ENCODE measurements at regions of chr14 and their contacts with region 1.

Region 1: GRCh38 chr14:77023001-77023996 is 5.2 kb downstream of the IRF2BPL start:
- DNase-seq: peak; percentile 77
- ATAC-seq: peak; percentile 24
- H3K4me3 Mint-ChIP-seq: peak overlapping the region; percentile 59
- H3K27ac Mint-ChIP-seq: peak overlapping the region; percentile 81
- H3K4me1 Mint-ChIP-seq: peaks cover 43% of the 10 kb centered on the region
- H3K27me3 Mint-ChIP-seq: no peaks in the 10 kb centered on the region

Region 2: DNA sequence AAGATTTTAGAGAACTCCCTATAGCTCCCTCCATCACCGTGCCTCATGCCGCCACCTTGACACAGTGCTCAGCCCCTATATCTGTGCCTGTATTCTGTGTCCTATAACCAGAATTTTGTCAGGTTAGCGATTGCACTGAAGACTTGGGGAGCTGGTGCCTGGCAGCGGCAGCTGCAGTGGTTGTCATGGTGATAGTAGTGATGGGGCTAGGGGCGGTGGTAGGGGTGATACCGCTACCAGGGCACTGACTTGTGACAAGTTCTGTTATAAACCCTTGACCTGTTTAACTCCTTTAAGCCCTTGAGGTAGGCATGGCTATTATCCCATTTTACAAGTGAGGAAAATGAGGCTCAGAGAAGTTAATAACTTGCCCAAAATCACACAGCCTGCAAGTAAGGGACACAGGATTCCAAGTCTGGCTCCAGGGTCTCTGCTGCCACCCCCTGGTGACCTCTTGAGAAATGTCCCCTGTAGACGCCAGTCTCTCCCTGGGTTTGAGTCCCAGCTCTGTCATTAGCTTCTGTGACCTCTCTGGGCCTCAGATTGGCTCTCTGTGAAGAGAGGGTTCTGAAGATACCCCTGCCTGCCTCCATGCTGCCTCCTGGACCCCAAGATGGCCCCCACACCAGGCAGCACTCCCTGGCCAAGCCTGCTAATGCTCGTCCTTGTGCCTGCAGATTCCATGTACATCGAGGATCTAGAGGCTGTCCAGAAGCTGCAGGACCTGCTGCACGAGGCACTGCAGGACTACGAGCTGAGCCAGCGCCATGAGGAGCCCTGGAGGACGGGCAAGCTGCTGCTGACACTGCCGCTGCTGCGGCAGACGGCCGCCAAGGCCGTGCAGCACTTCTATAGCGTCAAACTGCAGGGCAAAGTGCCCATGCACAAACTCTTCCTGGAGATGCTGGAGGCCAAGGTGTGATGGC is 525.5 kb before region 1 on chr14:
- CTCF ChIA-PET with region 1: no interaction called
- POLR2A ChIA-PET with region 1: no interaction called
- intact Hi-C with region 1: no loop called
- DNase-seq: peak; percentile 13
- ATAC-seq: no peak
- H3K4me3 Mint-ChIP-seq: no peak overlapping the region
- H3K27ac Mint-ChIP-seq: no peak overlapping the region
- H3K4me1 Mint-ChIP-seq: no peaks in the 10 kb centered on the region
- H3K27me3 Mint-ChIP-seq: no peaks in the 10 kb centered on the region

Region 3: DNA sequence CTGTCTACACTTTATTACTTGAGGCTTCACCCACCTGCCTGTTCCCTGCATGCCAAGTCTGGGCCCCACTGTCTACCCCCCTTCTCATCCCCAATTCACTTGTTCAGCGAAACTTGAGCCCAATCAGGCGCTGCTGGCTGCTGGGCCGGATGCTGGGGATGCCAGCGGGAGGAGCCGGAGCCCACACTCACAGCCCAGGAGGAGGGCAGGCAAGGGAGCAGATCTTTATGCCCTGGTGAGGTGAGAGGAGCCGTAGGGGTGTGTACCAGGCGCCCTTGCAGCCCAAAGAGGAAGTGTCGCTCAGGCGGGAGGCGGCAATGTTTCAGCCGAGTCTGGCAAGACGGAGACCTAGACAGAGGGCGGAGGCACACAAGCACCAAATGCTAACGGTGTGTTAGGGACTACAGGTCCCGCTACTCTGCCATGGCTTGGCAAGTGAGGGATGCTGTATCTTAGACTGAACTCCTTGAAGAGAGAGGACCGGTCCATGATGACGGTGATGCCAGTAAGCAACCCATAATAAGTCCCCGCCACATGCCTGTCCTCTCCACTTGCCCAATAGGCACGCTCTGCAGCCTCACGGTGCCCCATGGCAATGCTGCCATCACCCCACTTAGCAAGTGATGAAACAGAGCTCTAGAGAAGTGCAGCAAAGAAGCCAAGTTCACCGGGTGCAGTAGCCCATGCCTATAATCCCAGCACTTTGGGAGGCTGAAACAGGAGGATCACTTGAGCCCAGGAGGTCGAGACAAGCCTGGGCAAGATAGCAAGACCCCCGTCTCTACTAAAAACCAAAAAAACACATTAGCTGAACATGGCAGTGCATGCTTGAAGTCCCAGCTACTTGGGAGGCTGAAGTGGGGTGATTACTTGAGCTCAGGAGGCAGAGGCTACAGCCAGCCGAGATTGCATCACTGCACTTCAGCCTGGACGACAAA is 155.5 kb before region 1 on chr14:
- CTCF ChIA-PET with region 1: no interaction called
- POLR2A ChIA-PET with region 1: no interaction called
- intact Hi-C with region 1: no loop called
- DNase-seq: peak; percentile 65
- ATAC-seq: peak; percentile 83
- H3K4me3 Mint-ChIP-seq: peak overlapping the region; percentile 8
- H3K27ac Mint-ChIP-seq: peak overlapping the region; percentile 58
- H3K4me1 Mint-ChIP-seq: peaks cover 38% of the 10 kb centered on the region
- H3K27me3 Mint-ChIP-seq: no peaks in the 10 kb centered on the region

Region 4: GRCh38 chr14:76918751-76919543 is 104.4 kb before region 1 on chr14:
- CTCF ChIA-PET with region 1: interaction called, 13 read pairs
- POLR2A ChIA-PET with region 1: interaction called, 4 read pairs
- intact Hi-C with region 1: loop called in 1 of 2 experiments (anchors 10 kb)
- DNase-seq: peak; percentile 65
- ATAC-seq: no peak
- H3K4me3 Mint-ChIP-seq: no peak overlapping the region
- H3K27ac Mint-ChIP-seq: no peak overlapping the region
- H3K4me1 Mint-ChIP-seq: peaks cover 59% of the 10 kb centered on the region
- H3K27me3 Mint-ChIP-seq: no peaks in the 10 kb centered on the region

Region 5: GRCh38 chr14:76977793-76978720 is 45.2 kb before region 1 on chr14:
- CTCF ChIA-PET with region 1: interaction called, 6 read pairs
- POLR2A ChIA-PET with region 1: interaction called, 6 read pairs
- intact Hi-C with region 1: loop called (anchors 1 to 2 kb)
- DNase-seq: peak; percentile 94
- ATAC-seq: peak; percentile 99
- H3K4me3 Mint-ChIP-seq: peak overlapping the region; percentile 53
- H3K27ac Mint-ChIP-seq: peak overlapping the region; percentile 92
- H3K4me1 Mint-ChIP-seq: peaks cover 26% of the 10 kb centered on the region
- H3K27me3 Mint-ChIP-seq: no peaks in the 10 kb centered on the region

Region 6: DNA sequence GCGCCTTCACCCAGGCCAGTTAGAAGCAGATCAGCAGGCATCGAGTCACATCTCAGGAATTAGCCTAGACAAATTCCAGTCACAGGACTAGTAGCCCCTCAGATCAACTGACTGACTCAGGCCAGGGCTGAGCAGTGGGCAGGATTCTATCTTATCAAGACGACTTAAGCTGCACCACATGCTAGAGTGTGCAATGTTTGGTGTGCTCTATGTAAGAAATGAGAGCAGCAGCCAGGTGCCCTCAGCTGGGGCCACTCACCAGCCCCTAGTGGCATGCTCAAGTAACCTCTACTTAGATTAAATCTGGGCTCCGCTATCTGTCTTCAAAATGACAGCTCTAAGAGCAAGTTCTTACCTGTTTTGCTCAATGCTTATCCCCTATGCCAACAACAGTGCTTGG is 267.4 kb after region 1 on chr14:
- CTCF ChIA-PET with region 1: no interaction called
- POLR2A ChIA-PET with region 1: no interaction called
- intact Hi-C with region 1: no loop called
- DNase-seq: no peak
- ATAC-seq: no peak
- H3K4me3 Mint-ChIP-seq: no peak overlapping the region
- H3K27ac Mint-ChIP-seq: no peak overlapping the region
- H3K4me1 Mint-ChIP-seq: no peaks in the 10 kb centered on the region
- H3K27me3 Mint-ChIP-seq: no peaks in the 10 kb centered on the region